GM13977 (cell line): ENCODE measurements at regions of chr11 and their contacts with region 1.

Region 1: GRCh38 chr11:60786811-60787567 is 1.9 kb downstream of the MS4A10 start:
- DNase-seq: no peak
- CTCF ChIP-seq: no peak

Region 2: GRCh38 chr11:60589607-60590006 is 197.4 kb before region 1 on chr11:
- in situ Hi-C with region 1: no loop called
- DNase-seq: no peak
- CTCF ChIP-seq: no peak

Region 3: DNA sequence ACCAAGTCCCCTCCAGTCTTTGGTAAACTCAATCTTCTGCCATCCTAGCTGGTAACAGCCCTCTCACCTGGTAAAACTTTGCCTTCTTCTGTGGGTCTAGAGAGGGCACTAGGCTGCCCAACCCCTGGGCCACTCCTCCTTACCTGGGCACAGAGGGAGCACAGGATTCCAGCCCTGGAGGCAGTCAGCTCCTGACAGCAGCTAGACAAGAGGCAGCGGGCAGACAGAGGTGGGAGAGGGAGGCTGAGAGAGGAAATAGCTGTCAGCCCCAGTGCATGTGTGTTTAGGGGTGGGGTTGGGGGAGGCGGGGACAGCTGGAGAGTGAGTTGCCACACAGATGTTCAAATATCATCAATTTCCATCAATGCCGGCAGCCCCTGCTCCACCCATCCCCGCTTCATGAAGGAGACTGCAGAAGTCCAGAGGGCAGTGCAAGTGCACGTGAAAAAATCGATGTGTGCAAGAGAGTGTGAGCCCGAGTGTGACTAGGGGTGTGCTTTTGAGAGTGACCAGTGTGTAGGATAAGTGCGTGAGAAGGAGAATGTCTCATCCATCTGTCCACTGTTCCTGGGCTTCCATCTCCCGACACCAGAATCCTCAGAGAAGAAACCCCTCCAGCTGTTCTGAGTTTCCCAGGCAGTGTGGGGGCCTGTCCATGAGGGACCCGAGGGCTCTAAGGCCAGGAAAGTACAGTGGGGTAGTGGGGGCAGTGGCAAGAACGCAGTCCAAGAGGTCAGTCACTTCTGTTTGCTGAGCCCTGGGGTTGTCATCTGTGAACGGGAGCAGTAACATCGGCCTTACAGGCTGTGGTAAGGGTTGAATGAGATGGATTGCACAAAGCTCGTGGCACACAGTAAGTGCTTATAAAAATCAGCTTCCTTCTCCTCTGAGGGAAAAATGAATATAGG is 69.0 kb after region 1 on chr11 and contains the start of gene PTGDR2:
- in situ Hi-C with region 1: loop called (anchors 10 kb)
- DNase-seq: no peak
- CTCF ChIP-seq: no peak

Region 4: DNA sequence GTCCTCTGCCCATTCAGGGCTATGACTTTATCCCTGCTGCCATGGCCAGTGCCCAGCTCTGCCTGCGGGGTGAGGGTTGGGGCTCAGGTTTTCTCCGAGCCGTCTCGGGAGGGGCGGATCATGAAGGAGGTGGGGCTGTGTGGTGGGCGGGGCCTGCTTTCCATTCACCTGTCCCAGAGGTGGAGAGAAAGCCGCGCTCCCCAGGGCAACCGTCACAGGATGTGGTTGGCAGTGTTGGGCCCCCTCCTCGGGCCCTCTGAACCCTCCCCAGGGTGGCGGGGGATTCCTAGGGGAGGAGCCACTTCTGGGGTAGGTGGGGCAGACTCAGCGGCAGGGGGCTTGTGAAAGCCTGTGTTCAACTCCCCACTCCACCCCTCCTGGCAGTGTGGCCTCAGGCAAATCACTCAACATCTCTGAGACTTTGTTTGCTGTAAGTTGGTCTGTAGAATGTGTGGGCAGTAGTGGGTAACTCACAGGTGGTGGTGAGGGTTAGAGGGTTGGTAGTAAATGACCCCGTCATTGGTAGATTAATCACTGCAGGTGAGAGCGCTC is 234.7 kb after region 1 on chr11:
- in situ Hi-C with region 1: no loop called
- DNase-seq: peak; percentile 65
- CTCF ChIP-seq: no peak